Vagina (tissue), 2 donors: ENCODE measurements at regions of chr7 and their contacts with region 1.

Region 1: GRCh38 chr7:91866599-91867148 is 13.8 kb downstream of the MTERF1 start:
- DNase-seq: no peak
- H3K4me3 ChIP-seq: no peak overlapping the region
- H3K27ac ChIP-seq: no peak overlapping the region
- H3K4me1 ChIP-seq: no peaks in the 10 kb centered on the region
- H3K27me3 ChIP-seq: no peaks in the 10 kb centered on the region
- CTCF ChIP-seq: no peak
- POLR2A ChIP-seq: no peak

Region 2: GRCh38 chr7:91367812-91368578 is 498.7 kb before region 1 on chr7:
- intact Hi-C with region 1: no loop called
- DNase-seq: no peak
- H3K4me3 ChIP-seq: no peak overlapping the region
- H3K27ac ChIP-seq: no peak overlapping the region
- H3K4me1 ChIP-seq: no peaks in the 10 kb centered on the region
- H3K27me3 ChIP-seq: no peaks in the 10 kb centered on the region
- CTCF ChIP-seq: no peak
- POLR2A ChIP-seq: no peak

Region 3: GRCh38 chr7:91800389-91800788 is 66.3 kb before region 1 on chr7:
- intact Hi-C with region 1: no loop called
- DNase-seq: no peak
- H3K4me3 ChIP-seq: no peak overlapping the region
- H3K27ac ChIP-seq: no peak overlapping the region
- H3K4me1 ChIP-seq: no peaks in the 10 kb centered on the region
- H3K27me3 ChIP-seq: no peaks in the 10 kb centered on the region
- CTCF ChIP-seq: no peak
- POLR2A ChIP-seq: no peak

Region 4: GRCh38 chr7:91843831-91844230 is 22.8 kb before region 1 on chr7:
- intact Hi-C with region 1: loop called (anchors 2 kb)
- DNase-seq: no peak
- H3K4me3 ChIP-seq: no peak overlapping the region
- H3K27ac ChIP-seq: no peak overlapping the region
- H3K4me1 ChIP-seq: no peaks in the 10 kb centered on the region
- H3K27me3 ChIP-seq: no peaks in the 10 kb centered on the region
- CTCF ChIP-seq: no peak
- POLR2A ChIP-seq: no peak

Region 5: DNA sequence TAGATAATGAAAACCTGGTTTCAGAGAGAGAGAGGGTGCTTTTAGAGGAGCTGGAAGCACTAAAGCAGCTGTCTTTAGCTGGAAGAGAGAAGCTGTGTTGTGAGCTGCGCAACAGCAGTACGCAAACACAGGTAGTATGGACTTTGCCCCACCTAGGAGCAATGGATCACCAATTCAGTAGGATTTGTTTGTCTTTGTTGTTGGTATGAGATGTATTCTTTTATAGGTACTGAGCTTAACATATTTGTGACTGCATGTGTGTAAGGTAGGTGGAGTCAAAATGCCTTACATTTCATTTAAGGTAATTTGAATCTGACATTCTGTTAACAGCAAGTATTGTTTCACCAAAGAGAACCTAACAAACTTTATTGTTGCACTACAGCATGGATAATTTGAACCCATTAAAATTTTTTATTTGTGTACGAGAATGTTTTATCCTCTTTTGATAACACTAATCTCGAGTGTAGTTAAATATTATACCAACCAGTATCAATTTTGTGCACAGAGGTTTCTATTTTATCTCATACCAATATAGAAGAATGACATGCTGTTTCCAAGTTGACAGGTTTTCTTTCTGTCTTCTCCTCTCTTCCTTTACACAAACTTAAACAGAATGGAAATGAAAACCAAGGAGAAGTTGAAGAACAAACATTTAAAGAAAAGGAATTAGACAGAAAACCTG is 175.5 kb after region 1 on chr7:
- intact Hi-C with region 1: no loop called
- DNase-seq: no peak
- H3K4me3 ChIP-seq: no peak overlapping the region
- H3K27ac ChIP-seq: no peak overlapping the region
- H3K4me1 ChIP-seq: no peaks in the 10 kb centered on the region
- H3K27me3 ChIP-seq: no peaks in the 10 kb centered on the region
- CTCF ChIP-seq: no peak
- POLR2A ChIP-seq: no peak